Activated CD4-positive, alpha-beta T cell treated with anti-CD3 and anti-CD28 coated beads for 36 hours (primary cell): ENCODE measurements at regions of chr1 and their contacts with region 1.

Region 1: GRCh38 chr1:206725109-206725963 is 40.6 kb downstream of the MAPKAPK2 start:
- DNase-seq: peak; percentile 85
- ATAC-seq: peak; percentile 72
- H3K4me3 Mint-ChIP-seq: no peak overlapping the region
- H3K27ac Mint-ChIP-seq: peak overlapping the region; percentile 29
- H3K4me1 Mint-ChIP-seq: peaks cover 49% of the 10 kb centered on the region
- H3K27me3 Mint-ChIP-seq: no peaks in the 10 kb centered on the region

Region 2: GRCh38 chr1:206684478-206685333 is 40.6 kb before region 1 on chr1 and contains the start of gene MAPKAPK2:
- CTCF ChIA-PET with region 1: interaction called, 8 read pairs
- POLR2A ChIA-PET with region 1: no interaction called
- intact Hi-C with region 1: loop called in 1 of 2 experiments (anchors 5 kb)
- DNase-seq: peak; percentile 88
- ATAC-seq: peak; percentile 70
- H3K4me3 Mint-ChIP-seq: peak within 1 kb of the TSS; percentile 98
- H3K27ac Mint-ChIP-seq: peak within 1 kb of the TSS; percentile 94
- H3K4me1 Mint-ChIP-seq: peaks cover 66% of the 10 kb centered on the region
- H3K27me3 Mint-ChIP-seq: peaks cover 2% of the 10 kb centered on the region
- total RNA-seq, gene MAPKAPK2: 62.8 to 64.7 TPM

Region 3: GRCh38 chr1:206766251-206766856 is 41.0 kb after region 1 on chr1:
- CTCF ChIA-PET with region 1: interaction called, 10 read pairs
- POLR2A ChIA-PET with region 1: interaction called, 4 read pairs
- intact Hi-C with region 1: loop called in 1 of 2 experiments (anchors 1 kb)
- DNase-seq: peak; percentile 82
- ATAC-seq: peak; percentile 64
- H3K4me3 Mint-ChIP-seq: peak overlapping the region; percentile 29
- H3K27ac Mint-ChIP-seq: peak overlapping the region; percentile 44
- H3K4me1 Mint-ChIP-seq: peaks cover 63% of the 10 kb centered on the region
- H3K27me3 Mint-ChIP-seq: peaks cover 10% of the 10 kb centered on the region

Region 4: GRCh38 chr1:206808615-206809014 is 83.3 kb after region 1 on chr1:
- CTCF ChIA-PET with region 1: interaction called, 68 read pairs
- POLR2A ChIA-PET with region 1: no interaction called
- intact Hi-C with region 1: loop called (anchors 1 kb)
- DNase-seq: peak; percentile 63
- ATAC-seq: peak; percentile 83
- H3K4me3 Mint-ChIP-seq: no peak overlapping the region
- H3K27ac Mint-ChIP-seq: no peak overlapping the region
- H3K4me1 Mint-ChIP-seq: peaks cover 39% of the 10 kb centered on the region
- H3K27me3 Mint-ChIP-seq: peaks cover 2% of the 10 kb centered on the region

Region 5: DNA sequence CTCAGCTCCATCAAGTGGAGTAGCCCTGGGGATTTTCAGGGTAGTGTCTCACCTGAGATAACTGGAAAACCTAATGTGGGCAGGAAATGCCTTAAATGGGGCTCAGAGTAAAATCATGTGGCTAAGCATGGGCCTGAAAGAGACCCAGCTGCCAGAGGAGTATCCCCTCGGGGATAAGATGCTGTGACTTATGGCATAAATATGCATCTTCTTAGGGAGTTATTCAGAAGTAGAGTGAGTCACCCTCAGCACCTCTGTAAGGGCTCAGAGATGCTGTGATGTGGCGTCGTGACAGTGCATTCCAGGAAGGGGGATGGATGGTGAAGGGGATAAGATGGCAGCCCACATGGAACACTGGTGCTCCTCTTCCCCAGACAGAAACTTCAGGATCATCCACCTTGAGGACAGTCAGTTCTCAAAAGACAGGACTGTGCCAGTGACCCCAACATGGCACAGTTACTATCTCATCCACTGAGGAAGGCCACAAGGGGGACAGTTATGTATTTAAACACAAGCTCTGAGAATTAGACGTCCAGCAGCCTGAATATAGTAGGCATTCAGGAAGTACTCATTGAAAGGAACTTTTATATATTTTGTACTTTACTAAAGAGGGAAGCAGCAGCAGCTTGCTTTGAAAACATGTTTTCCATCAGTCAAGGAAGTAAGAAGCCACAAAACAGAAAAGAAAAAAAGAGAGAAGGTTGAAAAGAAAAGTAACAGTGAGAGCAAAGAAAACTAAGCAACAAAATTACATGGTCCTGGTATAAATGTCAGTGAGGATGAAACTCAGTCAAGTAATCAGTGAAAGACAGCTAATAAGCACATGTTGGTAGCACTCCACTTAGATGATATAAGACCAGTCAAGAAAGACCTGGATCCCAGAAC is 180.2 kb after region 1 on chr1:
- CTCF ChIA-PET with region 1: interaction called, 19 read pairs
- POLR2A ChIA-PET with region 1: no interaction called
- intact Hi-C with region 1: no loop called
- DNase-seq: peak; percentile 76
- ATAC-seq: peak; percentile 93
- H3K4me3 Mint-ChIP-seq: peak overlapping the region; percentile 27
- H3K27ac Mint-ChIP-seq: peak overlapping the region; percentile 87
- H3K4me1 Mint-ChIP-seq: peaks cover 86% of the 10 kb centered on the region
- H3K27me3 Mint-ChIP-seq: no peaks in the 10 kb centered on the region

Region 6: GRCh38 chr1:206935491-206936067 is 210.2 kb after region 1 on chr1:
- CTCF ChIA-PET with region 1: interaction called, 12 read pairs
- POLR2A ChIA-PET with region 1: no interaction called
- intact Hi-C with region 1: no loop called
- DNase-seq: peak; percentile 79
- ATAC-seq: peak; percentile 76
- H3K4me3 Mint-ChIP-seq: no peak overlapping the region
- H3K27ac Mint-ChIP-seq: no peak overlapping the region
- H3K4me1 Mint-ChIP-seq: peaks cover 23% of the 10 kb centered on the region
- H3K27me3 Mint-ChIP-seq: no peaks in the 10 kb centered on the region

Region 7: GRCh38 chr1:207429963-207430362 is 704.6 kb after region 1 on chr1:
- CTCF ChIA-PET with region 1: no interaction called
- POLR2A ChIA-PET with region 1: no interaction called
- intact Hi-C with region 1: no loop called
- DNase-seq: no peak
- ATAC-seq: no peak
- H3K4me3 Mint-ChIP-seq: no peak overlapping the region
- H3K27ac Mint-ChIP-seq: no peak overlapping the region
- H3K4me1 Mint-ChIP-seq: no peaks in the 10 kb centered on the region
- H3K27me3 Mint-ChIP-seq: peaks cover 14% of the 10 kb centered on the region